ENCODE measurements at regions of chr15 and their contacts with region 1.

Region 1: GRCh38 chr15:58510715-58511598 is 79.2 kb downstream of the LIPC start:
- DNase-seq: no peak
- H3K27ac ChIP-seq: no peak overlapping the region
- CTCF ChIP-seq: no peak

Region 2: DNA sequence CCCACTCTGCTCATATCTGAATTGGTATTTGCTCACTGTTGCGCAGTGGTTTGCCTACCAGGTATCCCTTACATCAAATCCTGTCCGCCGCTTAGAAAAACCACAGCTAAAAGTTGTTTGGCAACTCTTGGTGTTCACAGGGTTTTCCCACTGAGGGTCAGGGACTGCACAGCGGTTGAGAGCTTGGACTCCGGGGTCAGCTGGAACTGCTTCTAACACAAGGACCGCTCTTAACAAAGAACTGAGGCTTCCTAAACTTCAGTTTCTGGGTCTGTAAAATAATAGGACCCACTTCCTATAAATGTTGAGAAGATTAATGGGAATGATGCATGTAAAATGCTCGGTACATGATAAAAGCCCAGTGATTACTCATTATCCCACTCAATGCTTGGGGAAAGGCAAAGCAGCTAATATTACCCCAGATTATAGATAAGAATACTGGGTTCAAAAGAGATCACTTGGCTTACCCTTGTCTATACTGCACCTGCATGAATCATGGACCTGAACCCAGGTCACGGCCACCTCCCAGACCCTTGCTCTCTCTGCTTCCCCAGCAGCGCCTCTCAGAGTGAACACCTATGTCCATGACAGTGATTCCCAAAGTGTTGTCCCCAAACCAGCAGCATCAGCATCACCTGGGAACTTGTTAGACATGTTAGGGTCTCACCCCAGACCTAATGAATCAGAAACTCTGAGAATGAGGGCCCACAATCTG is 43.1 kb before region 1 on chr15:
- CTCF ChIA-PET with region 1: no interaction called
- POLR2A ChIA-PET with region 1: interaction called, 16 read pairs
- DNase-seq: no peak
- H3K27ac ChIP-seq: no peak overlapping the region
- CTCF ChIP-seq: no peak